RWPE1 (cell line): ENCODE measurements at regions of chr17 and their contacts with region 1.

Region 1: GRCh38 chr17:1055751-1056645 is 59.1 kb downstream of the TIMM22 start:
- DNase-seq: peak; percentile 54
- H3K27ac ChIP-seq: peak overlapping the region; percentile 58
- CTCF ChIP-seq: peak; percentile 71

Region 2: GRCh38 chr17:732067-732901 is 323.7 kb before region 1 on chr17 and contains the start of gene TLCD3A:
- CTCF ChIA-PET with region 1: no interaction called
- POLR2A ChIA-PET with region 1: no interaction called
- DNase-seq: peak; percentile 73
- H3K27ac ChIP-seq: peak within 1 kb of the TSS; percentile 94
- CTCF ChIP-seq: no peak

Region 3: GRCh38 chr17:1012408-1012761 is 43.6 kb before region 1 on chr17:
- CTCF ChIA-PET with region 1: no interaction called
- POLR2A ChIA-PET with region 1: no interaction called
- DNase-seq: no peak
- H3K27ac ChIP-seq: no peak overlapping the region
- CTCF ChIP-seq: no peak

Region 4: DNA sequence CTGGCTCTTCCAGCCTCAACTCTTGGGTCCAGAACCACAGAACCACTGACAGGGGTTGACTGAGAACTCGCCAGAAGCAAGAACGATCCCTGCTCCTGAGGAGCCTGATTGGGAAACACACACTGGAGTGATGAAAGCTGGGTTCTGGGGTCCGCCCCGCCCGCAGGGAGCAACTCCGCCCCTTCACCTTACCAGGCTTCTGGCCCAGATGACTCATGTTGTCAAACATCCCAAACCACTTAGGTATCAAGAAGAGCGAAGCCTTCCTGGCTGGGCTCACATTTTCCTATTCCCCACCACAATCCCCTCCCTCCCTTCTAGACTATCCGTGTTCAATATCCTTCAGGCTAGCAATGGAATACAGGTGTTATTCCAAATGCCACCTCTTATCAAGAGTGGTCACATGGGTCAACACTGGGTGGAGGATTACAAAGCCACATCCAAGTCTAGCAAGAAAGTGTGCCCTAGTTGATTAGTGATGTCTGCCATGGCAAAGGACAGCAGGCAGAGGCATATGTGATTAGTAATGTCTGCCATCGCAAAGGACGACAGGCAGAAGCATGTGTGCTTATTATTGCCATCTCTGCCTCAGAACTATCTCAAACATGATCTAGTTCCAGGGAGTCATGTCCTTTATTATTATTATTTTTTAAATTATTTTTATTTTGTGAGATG is 11.4 kb after region 1 on chr17:
- CTCF ChIA-PET with region 1: interaction called, 13 read pairs
- POLR2A ChIA-PET with region 1: no interaction called
- DNase-seq: peak; percentile 97
- H3K27ac ChIP-seq: peak overlapping the region; percentile 81
- CTCF ChIP-seq: no peak

Region 5: DNA sequence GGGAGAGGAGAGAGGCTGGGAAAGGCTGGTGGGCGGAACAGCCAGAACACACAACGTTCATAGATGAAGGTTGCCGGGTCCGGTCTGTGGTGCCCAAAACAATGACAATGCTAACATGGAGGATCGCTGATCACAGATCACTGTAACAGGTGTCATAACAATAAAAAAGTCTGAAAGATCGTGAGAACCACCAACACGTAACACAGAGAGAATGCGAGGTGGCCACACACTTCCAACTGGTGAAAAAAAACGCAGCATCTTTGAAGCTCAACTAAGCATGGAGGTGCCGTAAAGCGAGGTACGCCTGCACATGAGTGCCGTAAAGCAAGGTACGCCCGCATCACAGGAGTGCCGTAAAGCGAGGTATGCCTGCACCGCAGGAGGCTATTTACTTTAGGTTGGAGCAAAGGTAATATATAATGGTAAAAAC is 81.5 kb after region 1 on chr17:
- CTCF ChIA-PET with region 1: interaction called, 4 read pairs
- POLR2A ChIA-PET with region 1: interaction called, 18 read pairs
- DNase-seq: peak; percentile 83
- H3K27ac ChIP-seq: peak overlapping the region; percentile 51
- CTCF ChIP-seq: no peak

Region 6: DNA sequence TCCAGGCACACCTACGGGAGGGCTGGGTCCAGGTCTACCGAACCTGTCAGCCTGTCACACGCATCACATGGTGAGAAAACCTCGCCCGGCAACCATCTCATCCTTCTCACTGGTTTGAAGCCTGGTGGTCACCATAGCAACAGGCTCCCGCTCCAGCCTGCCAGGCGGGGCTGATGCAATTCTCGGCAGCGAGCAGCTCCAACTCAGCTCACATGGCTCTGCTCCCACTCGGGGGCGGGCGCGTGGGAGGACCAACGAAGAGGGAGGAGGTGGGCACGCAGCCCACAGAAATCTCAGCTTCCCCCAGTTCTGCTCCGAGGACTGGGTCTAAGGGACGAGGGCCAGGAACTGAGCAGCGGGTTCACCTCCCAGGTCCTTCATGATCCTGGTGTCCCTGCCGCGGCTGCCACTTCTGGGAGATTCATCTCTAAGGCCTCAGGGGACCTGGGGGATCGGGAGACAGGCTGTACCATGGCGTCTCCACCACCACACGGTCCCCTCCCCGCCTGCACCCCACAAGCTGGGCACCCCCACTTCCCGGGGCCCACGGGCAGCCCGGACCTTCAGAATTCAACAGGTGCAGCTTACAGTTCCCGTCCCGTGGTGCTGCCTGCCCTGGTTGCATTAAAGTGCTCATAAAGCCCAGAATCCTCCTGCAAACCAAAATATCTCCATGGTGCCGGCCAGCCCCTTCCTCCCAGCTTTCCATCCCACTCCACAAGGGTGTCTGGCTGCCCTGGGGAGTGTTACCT is 98.0 kb after region 1 on chr17:
- CTCF ChIA-PET with region 1: interaction called, 30 read pairs
- POLR2A ChIA-PET with region 1: no interaction called
- DNase-seq: peak; percentile 71
- H3K27ac ChIP-seq: no peak overlapping the region
- CTCF ChIP-seq: no peak